ENCODE measurements at regions of chr10 and their contacts with region 1.

Region 1: GRCh38 chr10:91163269-91163868 is 57.1 kb upstream of the PCGF5 start:
- DNase-seq: peak; percentile 55
- H3K4me3 ChIP-seq: peak overlapping the region; percentile 61 to 84 (median 71)
- H3K27ac ChIP-seq: peak overlapping the region; percentile 74
- H3K4me1 ChIP-seq: peaks cover 6% of the 10 kb centered on the region
- H3K27me3 ChIP-seq: no peaks in the 10 kb centered on the region
- CTCF ChIP-seq: no peak
- POLR2A ChIP-seq: peak; percentile 21

Region 2: DNA sequence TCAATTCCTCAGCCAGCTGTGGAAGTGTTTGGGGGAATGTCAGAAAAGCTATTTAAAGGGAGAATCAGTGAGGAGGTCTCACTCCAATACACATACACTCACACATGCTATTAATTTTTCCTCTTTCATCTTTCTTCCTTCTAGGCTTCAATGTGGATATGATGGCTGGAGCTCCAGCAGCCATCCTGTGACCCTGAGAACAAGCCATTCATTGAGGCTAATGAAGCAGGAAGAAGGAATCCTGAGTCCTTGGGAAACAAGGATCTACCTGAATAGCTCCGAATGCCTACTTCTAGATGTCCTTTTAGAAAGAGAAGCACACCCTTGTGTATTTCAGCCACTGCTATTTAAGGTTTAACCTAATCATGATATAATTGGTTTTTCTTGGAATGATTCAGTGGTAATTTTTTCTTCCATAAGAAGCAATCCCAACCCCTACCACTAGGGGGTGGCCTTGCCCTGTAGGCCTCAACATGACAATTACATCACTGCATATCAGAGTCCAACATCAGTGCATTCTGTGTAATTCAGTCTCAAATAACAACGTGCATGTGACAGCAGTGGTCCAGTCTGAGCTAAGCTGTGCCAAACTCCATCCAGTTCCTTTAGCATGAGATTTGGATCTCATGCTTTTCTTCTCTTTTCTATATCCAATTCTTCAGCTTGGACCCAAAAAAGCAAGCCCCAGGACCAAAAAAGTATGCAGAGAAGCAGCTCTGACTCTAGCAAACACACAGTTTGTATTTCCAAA is 157.2 kb before region 1 on chr10:
- CTCF ChIA-PET with region 1: interaction called, 3 read pairs
- POLR2A ChIA-PET with region 1: no interaction called
- dilution Hi-C with region 1: no loop called
- intact Hi-C with region 1: loop called (anchors 2 kb)
- DNase-seq: peak; percentile 90
- H3K4me3 ChIP-seq: no peak overlapping the region
- H3K27ac ChIP-seq: no peak overlapping the region
- H3K4me1 ChIP-seq: no peaks in the 10 kb centered on the region
- H3K27me3 ChIP-seq: no peaks in the 10 kb centered on the region
- CTCF ChIP-seq: peak; percentile 83 to 87
- POLR2A ChIP-seq: no peak

Region 3: DNA sequence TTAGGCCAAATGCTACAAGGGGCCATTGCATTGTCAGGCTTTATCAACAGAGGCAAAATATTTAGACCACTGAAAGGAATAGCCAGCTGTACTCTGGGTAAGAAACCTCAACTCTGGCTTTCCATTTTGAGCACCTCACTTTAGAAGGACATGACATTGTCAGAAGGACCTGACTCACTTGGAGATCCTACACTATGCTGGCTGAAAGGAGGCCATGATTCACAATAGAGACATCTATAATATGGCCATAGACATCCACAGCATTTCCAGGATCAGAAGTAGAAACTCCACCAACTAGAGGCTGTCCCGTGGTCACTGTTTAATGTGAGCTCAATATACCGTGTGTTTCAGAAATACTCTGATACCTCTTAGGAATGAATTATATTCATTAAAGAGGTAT is 901.1 kb after region 1 on chr10:
- CTCF ChIA-PET with region 1: no interaction called
- POLR2A ChIA-PET with region 1: no interaction called
- dilution Hi-C with region 1: no loop called
- intact Hi-C with region 1: no loop called
- DNase-seq: no peak
- H3K4me3 ChIP-seq: no peak overlapping the region
- H3K27ac ChIP-seq: no peak overlapping the region
- H3K4me1 ChIP-seq: no peaks in the 10 kb centered on the region
- H3K27me3 ChIP-seq: no peaks in the 10 kb centered on the region
- CTCF ChIP-seq: no peak
- POLR2A ChIP-seq: no peak

Measured in endothelial cell of umbilical vein (primary cell).